ENCODE measurements at regions of chr18 and their contacts with region 1.

Region 1: GRCh38 chr18:7370802-7371201 is 139.9 kb downstream of the LRRC30 start:
- DNase-seq: no peak
- H3K4me3 ChIP-seq: no peak overlapping the region
- H3K27ac ChIP-seq: peak overlapping the region in 1 of 2 donors; percentile 80
- H3K4me1 ChIP-seq: no peaks in the 10 kb centered on the region
- H3K27me3 ChIP-seq: no peaks in the 10 kb centered on the region
- CTCF ChIP-seq: no peak
- POLR2A ChIP-seq: no peak

Region 2: GRCh38 chr18:7325126-7325430 is 45.7 kb before region 1 on chr18:
- intact Hi-C with region 1: no loop called
- DNase-seq: no peak
- H3K4me3 ChIP-seq: no peak overlapping the region
- H3K27ac ChIP-seq: no peak overlapping the region
- H3K4me1 ChIP-seq: no peaks in the 10 kb centered on the region
- H3K27me3 ChIP-seq: no peaks in the 10 kb centered on the region
- CTCF ChIP-seq: no peak
- POLR2A ChIP-seq: no peak

Region 3: DNA sequence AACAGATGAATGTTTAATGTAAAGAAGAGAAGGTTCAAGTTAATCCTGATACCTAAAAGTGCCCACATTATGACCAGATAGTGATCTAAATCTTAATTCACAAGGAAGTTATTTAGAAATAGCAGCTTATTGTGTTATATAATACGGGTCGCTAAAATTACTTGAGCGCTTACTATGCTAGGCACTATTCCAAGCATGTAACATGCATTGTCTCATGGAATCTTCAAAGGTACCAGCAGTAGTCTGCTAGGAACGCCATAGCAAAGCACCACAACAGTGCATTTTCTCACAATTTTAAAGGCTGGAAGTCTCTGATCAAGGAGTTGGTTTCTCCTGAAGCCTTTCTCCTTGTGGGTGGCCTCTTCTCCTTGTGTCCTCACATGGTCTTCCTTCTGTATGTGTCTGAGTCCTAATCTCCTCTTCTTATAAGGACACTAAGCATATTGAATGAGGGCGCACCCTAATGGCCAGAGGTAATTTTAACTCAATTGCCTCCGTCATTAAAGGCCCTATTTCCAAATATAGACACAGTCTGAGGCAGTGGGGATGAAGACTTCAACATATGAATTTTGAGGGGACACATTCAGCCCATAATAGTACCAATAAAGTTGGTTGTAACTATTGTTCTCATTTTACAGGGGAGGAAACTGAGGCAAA is 21.5 kb before region 1 on chr18:
- intact Hi-C with region 1: loop called (anchors 1 kb)
- DNase-seq: no peak
- H3K4me3 ChIP-seq: no peak overlapping the region
- H3K27ac ChIP-seq: no peak overlapping the region
- H3K4me1 ChIP-seq: no peaks in the 10 kb centered on the region
- H3K27me3 ChIP-seq: no peaks in the 10 kb centered on the region
- CTCF ChIP-seq: no peak
- POLR2A ChIP-seq: no peak